GM12878 (cell line): ENCODE measurements at regions of chr5 and their contacts with region 1.

Region 1: GRCh38 chr5:154072414-154073171 is 33.8 kb downstream of the MFAP3 start:
- DNase-seq: peak; percentile 43
- ATAC-seq: peak; percentile 99
- H3K4me3 ChIP-seq: no peak overlapping the region
- H3K27ac ChIP-seq: no peak overlapping the region
- H3K4me1 ChIP-seq: no peaks in the 10 kb centered on the region
- H3K27me3 ChIP-seq: no peaks in the 10 kb centered on the region
- CTCF ChIP-seq: peak; percentile 85 to 98 (median 93)
- EP300 ChIP-seq: no peak
- POLR2A ChIP-seq: no peak
- RAD21 ChIP-seq: peak; percentile 96

Region 2: GRCh38 chr5:153896701-153897100 is 175.9 kb before region 1 on chr5:
- CTCF ChIA-PET with region 1: no interaction called
- POLR2A ChIA-PET with region 1: no interaction called
- RAD21 ChIA-PET with region 1: no interaction called
- SMC1A ChIA-PET with region 1: no interaction called
- in situ Hi-C with region 1: no loop called
- intact Hi-C with region 1: no loop called
- DNase-seq: peak; percentile 63
- ATAC-seq: peak; percentile 98
- H3K4me3 ChIP-seq: no peak overlapping the region
- H3K27ac ChIP-seq: no peak overlapping the region
- H3K4me1 ChIP-seq: 0 out of 2 replicates have a peak, but pooled peaks cover 3% of the 10 kb centered on the region
- H3K27me3 ChIP-seq: no peaks in the 10 kb centered on the region
- CTCF ChIP-seq: no peak
- EP300 ChIP-seq: peak in 1 of 2 experiments; percentile 64; a peak in 1 of 4 replicates
- POLR2A ChIP-seq: no peak
- RAD21 ChIP-seq: no peak

Region 3: GRCh38 chr5:154157483-154158378 is 85.1 kb after region 1 on chr5:
- CTCF ChIA-PET with region 1: interaction called, 10 read pairs
- POLR2A ChIA-PET with region 1: no interaction called
- RAD21 ChIA-PET with region 1: interaction called, 6 read pairs
- SMC1A ChIA-PET with region 1: interaction called, 4 read pairs
- in situ Hi-C with region 1: no loop called
- intact Hi-C with region 1: no loop called
- DNase-seq: no peak
- ATAC-seq: peak; percentile 36; the same call in 1 of the 3 replicates
- H3K4me3 ChIP-seq: no peak overlapping the region
- H3K27ac ChIP-seq: no peak overlapping the region
- H3K4me1 ChIP-seq: no peaks in the 10 kb centered on the region
- H3K27me3 ChIP-seq: peaks cover 0 to 3% of the 10 kb centered on the region in 2 experiments; a peak in 1 of 4 replicates
- CTCF ChIP-seq: peak; percentile 15 to 44 (median 44); a peak in 5 of 6 replicates
- EP300 ChIP-seq: no peak
- POLR2A ChIP-seq: no peak
- RAD21 ChIP-seq: no peak

Region 4: DNA sequence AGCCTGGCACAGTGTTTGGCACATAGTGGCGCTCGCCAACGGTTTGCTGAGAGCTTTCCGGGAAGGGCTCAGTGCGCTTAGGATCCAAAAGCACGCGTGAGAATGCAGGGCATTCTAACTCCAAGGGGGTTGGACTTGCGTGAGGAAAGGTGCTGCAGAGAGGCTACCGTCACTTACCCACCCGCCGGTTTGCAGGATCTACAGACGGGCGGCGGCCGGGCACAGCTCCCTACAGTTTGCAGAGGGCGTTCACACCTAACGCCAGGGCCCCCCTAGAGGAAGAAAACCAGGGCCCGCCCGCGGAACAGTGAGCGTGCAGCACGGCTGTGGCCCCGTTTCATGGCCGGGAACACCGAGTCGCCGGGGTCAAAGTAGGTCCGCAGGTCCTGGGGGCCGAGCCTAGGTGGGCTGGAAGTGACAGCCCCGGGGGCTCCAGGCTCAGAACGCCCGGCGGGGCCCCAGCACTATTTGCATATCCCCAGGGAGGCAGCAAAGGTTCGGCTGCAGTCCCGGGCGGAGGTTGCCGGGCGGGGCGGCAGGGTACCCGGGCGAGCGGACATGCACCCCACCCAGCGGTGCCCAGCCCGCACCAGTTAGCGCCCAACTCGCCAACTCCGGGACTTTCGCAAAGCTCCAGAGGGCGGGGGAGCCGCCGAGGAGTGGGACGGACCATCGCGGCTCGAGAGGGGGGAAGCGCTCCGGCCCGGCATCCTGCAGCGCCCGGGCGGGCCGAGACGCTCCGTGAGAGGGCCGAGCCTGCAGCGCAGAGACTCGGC is 117.4 kb after region 1 on chr5:
- CTCF ChIA-PET with region 1: interaction called, 17 read pairs
- POLR2A ChIA-PET with region 1: no interaction called
- RAD21 ChIA-PET with region 1: interaction called, 18 read pairs
- SMC1A ChIA-PET with region 1: interaction called, 10 read pairs
- in situ Hi-C with region 1: loop called (anchors 10 kb)
- intact Hi-C with region 1: no loop called
- DNase-seq: no peak
- ATAC-seq: peak; percentile 84
- H3K4me3 ChIP-seq: peak overlapping the region; percentile 82
- H3K27ac ChIP-seq: peak overlapping the region; percentile 65
- H3K4me1 ChIP-seq: peaks cover 8% of the 10 kb centered on the region
- H3K27me3 ChIP-seq: peaks cover 0 to 4% of the 10 kb centered on the region in 2 experiments; a peak in 1 of 4 replicates
- CTCF ChIP-seq: peak; percentile 26 to 44 (median 43); a peak in 5 of 6 replicates
- EP300 ChIP-seq: no peak
- POLR2A ChIP-seq: 0 out of 2 replicates have a peak, but pooled peaks have one; percentile 45
- RAD21 ChIP-seq: no peak

Region 5: DNA sequence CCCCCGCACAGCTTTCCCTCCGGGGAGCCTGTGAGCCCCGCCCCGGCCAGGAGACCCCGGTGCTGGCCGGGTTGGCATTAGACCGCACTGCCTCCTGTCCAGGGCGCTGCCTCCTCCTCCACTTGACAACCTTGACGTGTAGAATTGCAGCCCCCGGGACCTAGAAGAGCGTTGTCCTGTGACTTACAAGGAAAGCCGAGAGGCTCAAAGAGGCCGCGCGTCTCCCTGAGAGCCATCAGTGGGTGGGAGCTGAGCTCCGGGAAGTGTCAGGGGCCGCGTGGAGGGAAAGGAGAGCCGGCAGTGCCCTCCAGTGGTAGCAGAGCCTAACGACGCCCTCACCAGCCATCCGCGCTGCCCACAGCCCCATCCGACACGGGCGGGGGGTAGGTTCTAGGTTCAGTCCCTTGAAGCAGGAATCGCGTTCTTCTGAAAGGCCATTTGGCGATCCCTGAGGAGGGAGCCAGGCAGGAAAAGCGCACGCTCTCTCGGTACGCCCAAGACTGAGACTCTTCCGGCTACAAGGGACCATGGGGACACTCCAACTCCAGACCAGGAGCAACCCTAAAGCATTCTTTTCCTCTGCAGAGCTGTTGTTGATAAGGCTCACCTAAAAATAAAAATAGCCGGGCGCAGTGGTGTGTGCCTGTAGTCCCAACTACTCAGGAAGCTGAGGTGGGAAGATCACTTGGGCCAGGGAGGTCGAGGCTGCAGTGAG is 332.6 kb after region 1 on chr5:
- CTCF ChIA-PET with region 1: interaction called, 106 read pairs
- POLR2A ChIA-PET with region 1: interaction called, 3 read pairs
- RAD21 ChIA-PET with region 1: interaction called, 106 read pairs
- SMC1A ChIA-PET with region 1: interaction called, 129 read pairs
- in situ Hi-C with region 1: loop called (anchors 5 kb)
- intact Hi-C with region 1: loop called (anchors 1 kb)
- DNase-seq: no peak
- ATAC-seq: peak; percentile 100
- H3K4me3 ChIP-seq: no peak overlapping the region
- H3K27ac ChIP-seq: 0 out of 2 replicates have a peak overlapping the region, but pooled peaks have one; percentile 11
- H3K4me1 ChIP-seq: peaks cover 4% of the 10 kb centered on the region; the same call in 1 of the 2 replicates
- H3K27me3 ChIP-seq: no peaks in the 10 kb centered on the region
- CTCF ChIP-seq: peak; percentile 83 to 91 (median 90)
- EP300 ChIP-seq: no peak
- POLR2A ChIP-seq: peak; percentile 44; the same call in 1 of the 2 replicates
- RAD21 ChIP-seq: peak; percentile 92

Region 6: DNA sequence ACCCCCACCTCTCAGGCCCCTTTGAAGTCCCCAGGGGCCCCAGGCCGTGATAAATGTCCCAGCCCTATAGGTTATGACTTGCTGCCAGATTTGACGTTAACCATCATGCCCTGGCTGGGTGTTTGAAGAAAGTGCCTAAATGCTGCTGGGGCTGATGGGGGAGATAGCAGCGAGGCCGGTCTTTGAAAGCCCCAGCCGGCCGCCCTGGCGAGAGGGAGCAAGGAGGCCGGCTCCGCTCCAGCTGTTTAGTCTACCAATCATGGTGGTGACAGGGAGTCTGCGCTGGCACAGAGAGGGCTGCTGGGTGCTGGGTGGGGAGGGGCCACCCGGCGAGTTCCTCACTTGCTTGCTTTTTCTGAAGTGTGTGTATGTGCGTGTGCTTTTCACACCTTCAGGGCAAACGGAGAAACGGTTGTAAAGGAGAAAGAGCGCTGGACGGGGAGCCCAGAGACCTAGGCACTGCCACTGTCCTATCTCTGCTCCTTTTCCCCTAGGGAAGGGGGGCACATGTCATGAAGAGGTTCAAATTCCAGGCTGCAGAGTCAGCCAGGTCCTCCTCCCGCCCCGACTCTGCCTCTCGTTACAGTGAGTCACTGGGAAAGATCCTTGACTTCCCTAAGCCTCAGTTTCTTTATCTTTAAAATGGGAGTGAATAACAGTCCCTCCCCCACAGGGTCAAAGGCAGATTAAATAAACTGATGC is 531.5 kb after region 1 on chr5:
- CTCF ChIA-PET with region 1: interaction called, 12 read pairs
- POLR2A ChIA-PET with region 1: no interaction called
- RAD21 ChIA-PET with region 1: no interaction called
- SMC1A ChIA-PET with region 1: no interaction called
- in situ Hi-C with region 1: loop called (anchors 10 kb)
- intact Hi-C with region 1: no loop called
- DNase-seq: no peak
- ATAC-seq: peak; percentile 57
- H3K4me3 ChIP-seq: no peak overlapping the region
- H3K27ac ChIP-seq: no peak overlapping the region
- H3K4me1 ChIP-seq: no peaks in the 10 kb centered on the region
- H3K27me3 ChIP-seq: no peaks in the 10 kb centered on the region; a peak in 2 of 4 replicates
- CTCF ChIP-seq: no peak
- EP300 ChIP-seq: no peak
- POLR2A ChIP-seq: no peak
- RAD21 ChIP-seq: no peak

Region 7: GRCh38 chr5:154771383-154771901 is 698.8 kb after region 1 on chr5:
- CTCF ChIA-PET with region 1: no interaction called
- POLR2A ChIA-PET with region 1: no interaction called
- RAD21 ChIA-PET with region 1: no interaction called
- SMC1A ChIA-PET with region 1: no interaction called
- in situ Hi-C with region 1: no loop called
- intact Hi-C with region 1: no loop called
- DNase-seq: no peak
- ATAC-seq: no peak
- H3K4me3 ChIP-seq: no peak overlapping the region
- H3K27ac ChIP-seq: no peak overlapping the region
- H3K4me1 ChIP-seq: peaks cover 39% of the 10 kb centered on the region
- H3K27me3 ChIP-seq: no peaks in the 10 kb centered on the region
- CTCF ChIP-seq: no peak
- EP300 ChIP-seq: no peak
- POLR2A ChIP-seq: no peak
- RAD21 ChIP-seq: no peak